ENCODE measurements at regions of chrX and their contacts with region 1.

Region 1: DNA sequence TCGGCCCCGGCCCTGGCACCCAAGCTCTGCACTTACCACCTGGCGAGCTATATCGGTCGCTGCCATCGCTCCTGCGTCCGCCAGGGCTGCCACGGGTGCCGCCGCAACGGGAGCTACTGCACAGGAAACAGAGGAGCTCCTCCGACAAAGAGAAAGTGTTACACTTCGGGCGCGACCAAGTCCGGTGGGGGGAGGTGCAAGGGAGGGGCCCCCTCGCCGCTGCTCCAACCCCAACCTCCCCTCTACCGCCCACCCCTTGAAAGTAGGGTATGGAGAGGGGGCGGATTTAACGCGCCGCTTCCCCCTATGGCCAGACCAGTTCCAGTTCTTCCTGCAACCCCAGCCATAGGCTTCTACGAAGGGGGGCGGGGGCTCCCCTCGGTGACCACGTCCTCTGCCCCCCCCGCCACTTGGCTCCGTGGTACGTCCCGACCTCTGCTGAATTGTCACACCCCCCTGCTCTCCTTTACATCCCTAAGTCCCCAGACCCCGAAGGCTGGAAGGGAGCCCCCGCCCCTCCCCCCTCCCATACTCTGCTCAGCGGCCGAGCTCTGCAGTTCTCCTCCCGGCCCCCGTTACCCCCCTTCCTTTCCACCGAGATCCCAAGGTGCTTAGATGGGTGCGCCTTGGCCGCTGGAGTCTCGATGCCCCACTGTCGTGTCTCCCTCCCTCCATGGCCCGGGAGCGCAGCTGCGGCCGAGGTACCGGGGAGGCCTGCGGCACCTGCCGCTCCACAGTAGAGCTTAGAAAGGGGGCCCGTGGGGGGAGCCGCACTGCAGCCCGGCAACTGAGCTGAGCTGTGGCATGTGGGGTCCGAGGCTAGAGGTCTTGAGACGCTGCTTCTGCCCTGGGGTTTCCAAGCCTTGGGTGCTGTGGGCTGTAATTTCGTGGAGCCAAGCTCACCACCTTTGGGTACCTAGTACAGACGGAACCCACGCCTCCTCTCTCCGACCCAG is at the start of gene SEPTIN6:
- DNase-seq: peak; percentile 67 to 87 (median 75)
- ATAC-seq: peak; percentile 65 to 88 (median 84)
- H3K4me3 ChIP-seq: peak within 1 kb of the TSS; percentile 40 to 92 (median 75)
- H3K27ac ChIP-seq: peak within 1 kb of the TSS in 11 of 12 donors; percentile 32 to 83 (median 75)
- H3K4me1 ChIP-seq: peaks cover 0 to 21% (median 0%) of the 10 kb centered on the region in 12 donors
- H3K27me3 ChIP-seq: no peaks in the 10 kb centered on the region
- CTCF ChIP-seq: no peak
- POLR2A ChIP-seq: peak in 1 of 2 donors; percentile 49
- total RNA-seq, gene SEPTIN6: 7.6 to 36.4 (median 10.0) TPM

Region 2: GRCh38 chrX:119606280-119607015 is 86.9 kb before region 1 on chrX and contains the start of gene NKRF:
- intact Hi-C with region 1: loop called in 2 of 10 experiments (anchors 5 to 10 kb)
- DNase-seq: peak; percentile 91 to 96 (median 93)
- ATAC-seq: peak; percentile 86 to 96 (median 94)
- H3K4me3 ChIP-seq: peak within 1 kb of the TSS; percentile 55 to 98 (median 76)
- H3K27ac ChIP-seq: peak within 1 kb of the TSS; percentile 65 to 97 (median 88)
- H3K4me1 ChIP-seq: peaks cover 0 to 7% (median 0%) of the 10 kb centered on the region in 12 donors
- H3K27me3 ChIP-seq: peaks cover 0 to 9% (median 0%) of the 10 kb centered on the region in 9 donors
- CTCF ChIP-seq: no peak
- POLR2A ChIP-seq: peak in 1 of 2 donors; percentile 80
- total RNA-seq, gene NKRF: 3.9 to 6.0 (median 4.8) TPM

Region 3: GRCh38 chrX:119617517-119618164 is 75.7 kb before region 1 on chrX:
- intact Hi-C with region 1: loop called in 2 of 10 experiments (anchors 10 kb)
- DNase-seq: no peak
- ATAC-seq: no peak
- H3K4me3 ChIP-seq: no peak overlapping the region
- H3K27ac ChIP-seq: peak overlapping the region in 1 of 12 donors; percentile 58
- H3K4me1 ChIP-seq: peaks cover 0 to 16% (median 0%) of the 10 kb centered on the region in 12 donors
- H3K27me3 ChIP-seq: no peaks in the 10 kb centered on the region
- CTCF ChIP-seq: no peak
- POLR2A ChIP-seq: no peak

Region 4: GRCh38 chrX:119655125-119655524 is 38.2 kb before region 1 on chrX:
- intact Hi-C with region 1: loop called in 1 of 10 experiments (anchors 2 kb)
- DNase-seq: peak in 4 of 5 donors; percentile 30 to 74 (median 36)
- ATAC-seq: peak in 3 of 4 donors; percentile 76 to 84 (median 77)
- H3K4me3 ChIP-seq: no peak overlapping the region
- H3K27ac ChIP-seq: peak overlapping the region in 6 of 12 donors; percentile 32 to 70 (median 67)
- H3K4me1 ChIP-seq: peaks cover 0 to 6% (median 0%) of the 10 kb centered on the region in 12 donors
- H3K27me3 ChIP-seq: no peaks in the 10 kb centered on the region
- CTCF ChIP-seq: no peak
- POLR2A ChIP-seq: peak in 1 of 2 donors; percentile 16